ENCODE measurements at regions of chr1 and their contacts with region 1.

Region 1: DNA sequence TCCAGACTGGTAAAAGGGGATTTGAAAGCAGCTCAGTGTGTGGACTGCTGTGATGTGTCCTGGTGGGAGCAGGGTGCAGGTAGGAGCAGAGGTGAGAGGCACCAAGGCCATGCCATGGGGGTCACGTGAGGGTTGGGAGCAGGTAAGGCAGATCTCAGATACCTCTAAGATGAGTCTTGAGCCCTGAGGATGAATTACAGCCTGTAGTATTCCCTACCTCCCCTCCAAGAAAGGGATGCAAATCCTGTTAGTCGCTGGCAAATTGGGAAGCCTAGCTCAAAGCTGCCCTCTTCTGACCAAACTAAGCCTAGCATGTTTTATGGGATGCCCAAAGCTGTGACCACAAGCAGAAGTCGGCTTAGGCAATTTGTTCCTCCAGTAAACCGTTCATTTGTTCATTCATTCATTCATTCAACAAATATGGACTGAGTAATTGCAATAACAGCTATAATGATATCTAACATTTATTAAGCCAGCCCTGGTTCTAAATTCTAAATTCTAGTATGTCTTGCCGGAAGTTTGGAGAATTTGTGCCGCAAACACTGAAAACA is 3.9 kb upstream of the NUAK2 start:
- DNase-seq: no peak
- ATAC-seq: peak; percentile 27

Region 2: GRCh38 chr1:205275133-205275532 is 50.3 kb before region 1 on chr1:
- intact Hi-C with region 1: loop called (anchors 2 kb)
- DNase-seq: no peak
- ATAC-seq: no peak

Region 3: DNA sequence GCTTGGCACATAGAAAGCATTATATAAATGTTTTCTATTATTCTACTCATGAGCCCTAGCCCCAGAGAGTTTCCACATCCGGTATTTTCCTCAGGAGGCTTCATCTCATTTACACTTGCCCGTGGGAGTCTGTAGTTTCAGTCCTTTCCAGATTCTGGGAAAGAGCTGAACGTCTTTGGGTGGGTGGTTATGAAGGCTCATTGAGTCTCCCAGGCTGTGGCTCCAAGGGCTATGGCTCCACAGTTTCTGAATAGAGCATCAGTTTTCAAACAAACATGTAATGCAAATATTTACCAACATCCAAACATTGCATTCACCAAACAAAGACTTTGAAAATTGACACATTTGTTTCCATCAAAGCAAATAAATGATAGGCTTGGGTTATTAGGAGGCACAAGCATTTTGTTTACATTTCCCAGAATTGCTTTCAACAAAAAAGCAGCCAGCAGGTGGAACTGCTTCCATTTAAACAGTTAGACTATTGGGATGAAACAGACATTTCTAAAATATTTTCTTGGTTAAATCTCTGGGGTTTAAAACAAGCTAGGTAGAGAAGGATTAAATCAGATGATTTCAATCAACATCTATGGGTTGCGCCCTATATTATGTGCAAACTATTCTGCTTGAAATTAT is 97.7 kb after region 1 on chr1:
- intact Hi-C with region 1: no loop called
- DNase-seq: no peak
- ATAC-seq: no peak

Measured in left ventricle myocardium superior (tissue), 1 donor.